A673 (cell line): ENCODE measurements at regions of chr14 and their contacts with region 1.

Region 1: DNA sequence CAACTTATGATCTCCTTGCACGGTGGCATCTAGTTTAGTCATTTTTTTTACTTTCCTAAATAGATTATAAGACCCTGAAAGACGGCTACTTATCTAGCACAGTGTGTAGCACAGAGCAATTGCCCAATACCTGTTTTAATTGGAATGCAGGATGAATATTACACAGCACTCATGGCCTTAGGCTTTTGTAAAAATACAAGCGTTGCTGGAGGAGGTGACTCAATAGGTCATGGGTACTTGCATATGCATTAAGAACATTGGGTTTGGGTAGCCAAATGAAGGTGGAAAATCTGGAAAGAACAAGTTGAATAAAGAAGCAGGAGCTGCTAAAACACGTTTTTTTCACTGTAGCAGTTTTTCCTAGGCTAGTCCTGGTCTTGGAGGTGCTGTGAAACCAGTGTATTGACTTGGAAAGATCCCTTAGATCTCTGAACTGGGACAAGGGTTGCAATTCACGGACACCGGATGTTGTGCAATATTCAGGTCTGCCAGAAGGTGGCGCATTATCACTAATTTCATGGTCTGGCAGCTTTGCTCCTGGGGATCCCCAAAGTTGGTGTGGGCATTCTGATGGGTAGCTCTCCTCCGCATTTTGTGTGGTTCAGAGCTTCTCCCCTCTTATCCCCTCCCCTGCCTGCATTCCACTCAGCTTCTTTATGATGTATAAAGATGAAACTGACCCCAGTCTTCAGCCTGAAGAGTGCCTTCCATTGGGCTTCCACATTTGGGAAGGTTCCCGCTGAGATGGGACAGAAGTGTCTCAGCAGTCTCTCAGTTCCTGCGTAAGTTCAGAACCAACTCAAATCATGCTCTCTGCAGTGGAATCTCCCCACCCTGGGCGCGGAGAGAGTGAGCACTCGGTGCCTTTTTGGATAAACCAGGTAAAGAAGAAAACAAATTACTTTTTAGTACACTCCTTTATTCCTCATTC is 278.3 kb downstream of the NRXN3 start:
- DNase-seq: peak; percentile 60
- H3K4me3 ChIP-seq: no peak overlapping the region
- H3K27ac ChIP-seq: no peak overlapping the region
- H3K4me1 ChIP-seq: no peaks in the 10 kb centered on the region
- H3K27me3 ChIP-seq: no peaks in the 10 kb centered on the region
- CTCF ChIP-seq: peak; percentile 83

Region 2: GRCh38 chr14:78022059-78022458 is 426.4 kb before region 1 on chr14:
- CTCF ChIA-PET with region 1: no interaction called
- POLR2A ChIA-PET with region 1: no interaction called
- intact Hi-C with region 1: loop called (anchors 5 kb)
- DNase-seq: peak; percentile 86
- H3K4me3 ChIP-seq: no peak overlapping the region
- H3K27ac ChIP-seq: no peak overlapping the region
- H3K4me1 ChIP-seq: no peaks in the 10 kb centered on the region
- H3K27me3 ChIP-seq: no peaks in the 10 kb centered on the region
- CTCF ChIP-seq: peak; percentile 81

Region 3: GRCh38 chr14:78356391-78356790 is 92.0 kb before region 1 on chr14:
- CTCF ChIA-PET with region 1: no interaction called
- POLR2A ChIA-PET with region 1: no interaction called
- intact Hi-C with region 1: no loop called
- DNase-seq: no peak
- H3K4me3 ChIP-seq: no peak overlapping the region
- H3K27ac ChIP-seq: no peak overlapping the region
- H3K4me1 ChIP-seq: no peaks in the 10 kb centered on the region
- H3K27me3 ChIP-seq: peaks cover 15% of the 10 kb centered on the region
- CTCF ChIP-seq: no peak

Region 4: GRCh38 chr14:78491048-78491447 is 42.6 kb after region 1 on chr14:
- CTCF ChIA-PET with region 1: no interaction called
- POLR2A ChIA-PET with region 1: no interaction called
- intact Hi-C with region 1: no loop called
- DNase-seq: no peak
- H3K4me3 ChIP-seq: no peak overlapping the region
- H3K27ac ChIP-seq: no peak overlapping the region
- H3K4me1 ChIP-seq: no peaks in the 10 kb centered on the region
- H3K27me3 ChIP-seq: peaks cover 6% of the 10 kb centered on the region
- CTCF ChIP-seq: no peak

Region 5: GRCh38 chr14:78566026-78566858 is 117.8 kb after region 1 on chr14:
- CTCF ChIA-PET with region 1: interaction called, 20 read pairs
- POLR2A ChIA-PET with region 1: no interaction called
- intact Hi-C with region 1: loop called (anchors 1 kb)
- DNase-seq: peak; percentile 79
- H3K4me3 ChIP-seq: no peak overlapping the region
- H3K27ac ChIP-seq: no peak overlapping the region
- H3K4me1 ChIP-seq: no peaks in the 10 kb centered on the region
- H3K27me3 ChIP-seq: peaks cover 2% of the 10 kb centered on the region
- CTCF ChIP-seq: peak; percentile 85

Region 6: DNA sequence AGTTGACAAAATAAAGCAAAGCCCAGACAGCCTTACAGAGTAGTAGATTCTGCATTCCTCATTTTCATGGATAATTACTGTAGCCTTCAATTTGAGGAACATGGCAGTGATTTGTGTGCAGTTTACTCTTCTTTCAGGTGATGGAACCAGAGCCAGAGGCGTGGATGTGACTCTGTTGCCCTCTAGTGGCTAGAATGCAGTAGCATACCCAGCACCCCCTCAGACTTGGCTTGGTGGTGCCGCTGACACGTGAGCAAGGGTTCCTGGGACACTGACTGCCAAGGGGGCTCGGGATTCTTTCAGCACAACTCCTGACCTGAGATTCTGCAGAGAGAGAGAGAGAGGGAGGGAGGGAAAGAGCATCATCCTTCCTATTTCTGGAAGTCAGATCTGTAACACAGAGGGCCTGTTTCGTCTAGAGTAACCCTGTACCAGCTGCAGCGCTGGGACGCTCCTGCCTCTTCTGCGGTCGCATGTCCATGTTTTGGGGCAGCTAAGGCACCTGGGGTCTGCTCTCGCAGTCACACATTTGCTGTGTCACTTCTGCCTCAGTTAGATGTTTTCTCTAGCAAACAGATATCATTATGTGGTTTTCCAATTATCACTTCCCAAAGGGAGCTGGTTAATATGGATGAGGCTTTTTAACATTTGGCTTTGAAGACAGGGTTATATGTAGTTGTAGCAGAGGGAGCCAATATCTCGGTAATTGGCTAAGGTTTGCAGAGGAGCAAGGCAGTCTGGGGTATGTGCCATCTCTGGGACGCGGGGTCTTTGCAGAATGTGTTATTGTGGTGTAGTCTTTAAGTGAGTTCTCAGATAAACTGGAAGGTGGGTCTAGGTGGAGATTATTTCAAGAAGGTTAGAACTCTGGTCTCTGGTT is 149.9 kb after region 1 on chr14:
- CTCF ChIA-PET with region 1: no interaction called
- POLR2A ChIA-PET with region 1: no interaction called
- intact Hi-C with region 1: loop called (anchors 2 kb)
- DNase-seq: peak; percentile 69
- H3K4me3 ChIP-seq: no peak overlapping the region
- H3K27ac ChIP-seq: no peak overlapping the region
- H3K4me1 ChIP-seq: no peaks in the 10 kb centered on the region
- H3K27me3 ChIP-seq: peaks cover 14% of the 10 kb centered on the region
- CTCF ChIP-seq: peak; percentile 96

Region 7: DNA sequence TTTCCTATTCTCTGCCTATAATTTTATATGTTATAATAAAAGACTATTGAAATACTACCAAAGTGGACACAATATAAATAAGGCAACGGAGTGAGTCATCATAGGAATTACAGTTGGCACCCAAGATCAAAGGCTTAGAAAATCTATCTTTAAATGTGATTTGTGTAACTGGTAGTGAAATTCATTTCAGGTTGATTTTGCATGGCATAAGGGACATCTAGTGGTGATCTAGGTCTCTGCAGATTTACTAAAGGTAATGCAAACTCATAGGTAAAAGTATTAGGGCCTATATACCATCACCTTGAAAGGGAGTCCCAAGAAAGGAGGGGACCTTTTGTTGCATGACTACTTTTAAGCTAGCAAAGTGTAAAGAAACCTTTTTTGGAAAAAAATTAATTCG is 248.9 kb after region 1 on chr14:
- CTCF ChIA-PET with region 1: no interaction called
- POLR2A ChIA-PET with region 1: no interaction called
- intact Hi-C with region 1: loop called (anchors 5 kb)
- DNase-seq: peak; percentile 9
- H3K4me3 ChIP-seq: no peak overlapping the region
- H3K27ac ChIP-seq: no peak overlapping the region
- H3K4me1 ChIP-seq: no peaks in the 10 kb centered on the region
- H3K27me3 ChIP-seq: no peaks in the 10 kb centered on the region
- CTCF ChIP-seq: peak; percentile 52

Region 8: DNA sequence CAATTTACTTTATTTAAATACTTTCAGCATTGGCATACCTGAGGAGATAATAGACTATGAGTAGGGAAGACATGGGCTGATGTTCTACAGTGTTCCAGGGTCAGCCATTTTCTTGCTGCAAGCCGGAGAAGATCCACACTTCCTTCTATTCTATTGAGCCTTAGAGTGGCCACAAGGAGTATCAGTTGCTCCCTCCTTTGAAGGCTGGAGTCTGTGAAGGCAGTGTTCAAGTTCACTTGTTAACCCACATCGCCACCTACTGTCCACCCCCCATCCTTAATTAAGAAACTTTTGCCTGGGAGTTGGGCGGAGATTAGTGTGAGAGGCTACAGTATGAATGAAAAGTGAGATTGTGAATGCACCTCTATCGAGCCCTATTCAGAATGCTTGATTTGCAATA is 388.3 kb after region 1 on chr14:
- CTCF ChIA-PET with region 1: no interaction called
- POLR2A ChIA-PET with region 1: no interaction called
- intact Hi-C with region 1: loop called (anchors 5 kb)
- DNase-seq: peak; percentile 81
- H3K4me3 ChIP-seq: no peak overlapping the region
- H3K27ac ChIP-seq: no peak overlapping the region
- H3K4me1 ChIP-seq: no peaks in the 10 kb centered on the region
- H3K27me3 ChIP-seq: peaks cover 54% of the 10 kb centered on the region
- CTCF ChIP-seq: peak; percentile 66